ENCODE measurements at regions of chr16 and their contacts with region 1.

Region 1: DNA sequence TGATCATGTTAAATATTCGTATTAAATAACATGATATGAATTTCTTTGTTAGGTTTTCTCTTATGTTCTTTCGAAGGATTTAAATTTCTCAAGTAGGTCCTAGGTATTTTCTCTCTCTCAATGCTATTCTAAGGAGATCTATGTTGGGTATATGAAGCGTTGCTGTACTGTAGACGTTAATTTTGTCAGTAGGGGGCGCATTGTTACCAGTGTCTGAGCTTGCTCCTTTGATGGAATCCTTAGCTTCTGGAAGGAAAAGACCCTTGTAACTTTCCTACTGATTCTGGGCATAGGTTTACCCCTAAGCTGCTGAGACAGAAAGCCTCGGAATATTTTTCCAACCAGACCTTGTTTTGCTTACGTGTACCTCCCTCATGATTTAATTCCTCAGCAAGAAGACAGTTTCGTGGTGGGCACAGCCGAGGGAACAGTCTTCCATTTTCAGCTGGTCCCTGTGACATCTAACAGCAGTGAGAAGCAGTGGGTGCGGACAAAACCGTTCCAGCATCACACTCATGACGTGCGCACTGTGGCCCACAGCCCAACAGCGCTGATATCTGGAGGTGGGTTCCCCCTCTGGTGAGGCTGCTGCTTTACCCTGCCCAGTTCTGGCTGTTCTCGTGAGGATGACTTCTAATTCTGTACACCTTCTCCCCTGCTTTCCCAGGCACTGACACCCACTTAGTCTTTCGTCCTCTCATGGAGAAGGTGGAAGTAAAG is 17.9 kb downstream of the UTP4 start:
- DNase-seq: peak; percentile 79
- ATAC-seq: peak; percentile 71
- H3K4me3 ChIP-seq: no peak overlapping the region
- H3K4me3 Mint-ChIP-seq: no peak overlapping the region
- H3K27ac ChIP-seq: no peak overlapping the region
- H3K27ac Mint-ChIP-seq: no peak overlapping the region
- H3K4me1 ChIP-seq: no peaks in the 10 kb centered on the region
- H3K4me1 Mint-ChIP-seq: no peaks in the 10 kb centered on the region
- H3K27me3 ChIP-seq: no peaks in the 10 kb centered on the region
- H3K27me3 Mint-ChIP-seq: no peaks in the 10 kb centered on the region
- CTCF ChIP-seq: peak; percentile 84

Region 2: GRCh38 chr16:69073161-69073669 is 77.1 kb before region 1 on chr16:
- CTCF ChIA-PET with region 1: no interaction called
- POLR2A ChIA-PET with region 1: no interaction called
- intact Hi-C with region 1: no loop called
- DNase-seq: no peak
- ATAC-seq: no peak
- H3K4me3 ChIP-seq: no peak overlapping the region
- H3K4me3 Mint-ChIP-seq: no peak overlapping the region
- H3K27ac ChIP-seq: no peak overlapping the region
- H3K27ac Mint-ChIP-seq: no peak overlapping the region
- H3K4me1 ChIP-seq: no peaks in the 10 kb centered on the region
- H3K4me1 Mint-ChIP-seq: no peaks in the 10 kb centered on the region
- H3K27me3 ChIP-seq: no peaks in the 10 kb centered on the region
- H3K27me3 Mint-ChIP-seq: no peaks in the 10 kb centered on the region
- CTCF ChIP-seq: no peak

Region 3: DNA sequence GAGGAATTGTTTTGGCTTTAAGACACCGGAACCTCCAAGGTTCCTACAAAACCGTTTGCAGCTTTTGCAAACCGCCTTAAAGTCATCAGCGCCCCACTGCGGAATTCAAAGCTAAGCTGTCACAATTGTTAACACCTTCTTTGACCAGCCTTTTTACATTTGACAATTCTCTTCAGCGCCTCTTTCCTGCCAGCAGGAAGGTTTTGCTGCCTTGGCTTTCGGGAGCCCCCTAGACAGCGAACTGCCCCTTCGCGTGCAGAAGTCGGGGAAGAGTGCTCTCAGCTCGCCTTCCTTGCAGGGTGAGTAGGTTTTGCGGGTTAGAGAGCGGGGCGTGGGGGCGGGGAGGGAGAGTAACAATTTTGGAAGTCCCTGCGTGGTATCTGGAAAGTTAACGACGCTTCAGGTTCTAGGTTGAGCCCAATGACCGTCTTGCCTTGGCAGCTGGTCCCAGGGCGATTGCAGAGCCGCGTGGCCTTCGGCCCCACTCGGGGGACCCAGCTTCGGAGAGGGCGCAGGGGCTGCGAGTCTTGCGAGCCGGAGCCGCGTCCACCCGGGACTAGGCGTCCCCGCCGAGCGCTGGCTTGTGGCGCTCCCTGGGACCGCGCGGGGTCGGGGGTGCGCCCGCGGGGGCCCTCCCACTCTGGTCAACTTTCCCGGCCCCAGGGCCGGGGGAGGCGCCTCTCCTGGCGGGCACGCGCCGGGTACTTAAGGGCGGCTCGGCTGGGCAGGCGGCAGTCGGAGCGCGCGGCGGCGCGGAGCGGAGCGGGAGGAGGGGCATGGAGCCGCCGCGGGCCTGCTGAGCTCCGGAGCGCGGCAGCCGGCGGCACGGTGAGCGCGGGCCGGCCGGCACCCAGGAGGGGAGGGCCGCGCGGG is 44.6 kb before region 1 on chr16 and contains the start of gene HAS3:
- CTCF ChIA-PET with region 1: no interaction called
- POLR2A ChIA-PET with region 1: no interaction called
- intact Hi-C with region 1: no loop called
- DNase-seq: peak; percentile 44
- ATAC-seq: peak; percentile 33
- H3K4me3 ChIP-seq: peak within 1 kb of the TSS in 3 of 5 experiments; percentile 35 to 58 (median 44)
- H3K4me3 Mint-ChIP-seq: peak within 1 kb of the TSS; percentile 91
- H3K27ac ChIP-seq: no peak within 1 kb of the TSS
- H3K27ac Mint-ChIP-seq: no peak within 1 kb of the TSS
- H3K4me1 ChIP-seq: peaks cover 24 to 28% of the 10 kb centered on the region in 2 donors
- H3K4me1 Mint-ChIP-seq: peaks cover 16% of the 10 kb centered on the region
- H3K27me3 ChIP-seq: peaks cover 0 to 38% (median 25%) of the 10 kb centered on the region in 4 experiments
- H3K27me3 Mint-ChIP-seq: peaks cover 34% of the 10 kb centered on the region
- CTCF ChIP-seq: no peak
- total RNA-seq, gene HAS3: 2.5 and 2.6 TPM in 2 replicates

Region 4: GRCh38 chr16:69286941-69287713 is 136.8 kb after region 1 on chr16:
- CTCF ChIA-PET with region 1: interaction called, 314 read pairs
- POLR2A ChIA-PET with region 1: interaction called, 4 read pairs
- intact Hi-C with region 1: loop called (anchors 1 kb)
- DNase-seq: peak; percentile 75
- ATAC-seq: no peak
- H3K4me3 ChIP-seq: no peak overlapping the region
- H3K4me3 Mint-ChIP-seq: no peak overlapping the region
- H3K27ac ChIP-seq: no peak overlapping the region
- H3K27ac Mint-ChIP-seq: no peak overlapping the region
- H3K4me1 ChIP-seq: no peaks in the 10 kb centered on the region
- H3K4me1 Mint-ChIP-seq: peaks cover 1% of the 10 kb centered on the region
- H3K27me3 ChIP-seq: no peaks in the 10 kb centered on the region
- H3K27me3 Mint-ChIP-seq: no peaks in the 10 kb centered on the region
- CTCF ChIP-seq: peak; percentile 79

Region 5: DNA sequence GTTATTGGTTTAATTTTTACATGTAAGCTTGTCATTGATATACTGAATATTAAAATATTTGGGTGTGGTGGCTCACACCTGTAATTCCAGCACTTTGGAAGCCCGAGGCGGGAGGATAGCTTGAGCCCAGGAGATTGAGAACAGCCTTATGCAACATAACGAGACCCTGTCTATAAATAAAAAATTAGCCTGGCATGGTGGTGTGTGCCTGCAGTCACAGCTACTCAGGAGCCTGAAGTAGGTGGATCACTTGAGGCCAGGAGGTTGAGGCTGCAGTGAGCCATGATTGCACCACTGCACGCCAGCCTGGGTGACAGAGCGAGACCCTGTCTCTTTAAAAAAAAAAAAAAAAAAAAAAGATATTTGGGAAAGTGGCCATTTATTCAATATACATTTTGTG is 447.7 kb after region 1 on chr16:
- CTCF ChIA-PET with region 1: no interaction called
- POLR2A ChIA-PET with region 1: interaction called, 11 read pairs
- intact Hi-C with region 1: no loop called
- DNase-seq: no peak
- ATAC-seq: no peak
- H3K4me3 ChIP-seq: no peak overlapping the region
- H3K4me3 Mint-ChIP-seq: no peak overlapping the region
- H3K27ac ChIP-seq: no peak overlapping the region
- H3K27ac Mint-ChIP-seq: no peak overlapping the region
- H3K4me1 ChIP-seq: no peaks in the 10 kb centered on the region
- H3K4me1 Mint-ChIP-seq: peaks cover 35% of the 10 kb centered on the region
- H3K27me3 ChIP-seq: no peaks in the 10 kb centered on the region
- H3K27me3 Mint-ChIP-seq: no peaks in the 10 kb centered on the region
- CTCF ChIP-seq: no peak